Transverse colon (tissue), 4 donors: ENCODE measurements at regions of chr11 and their contacts with region 1.

Region 1: GRCh38 chr11:66686801-66687750 is 9.4 kb upstream of the RBM4B start:
- DNase-seq: no peak
- H3K4me3 ChIP-seq: no peak overlapping the region
- H3K27ac ChIP-seq: no peak overlapping the region
- H3K4me1 ChIP-seq: no peaks in the 10 kb centered on the region
- H3K27me3 ChIP-seq: no peaks in the 10 kb centered on the region
- CTCF ChIP-seq: no peak
- EP300 ChIP-seq: no peak
- POLR2A ChIP-seq: no peak

Region 2: DNA sequence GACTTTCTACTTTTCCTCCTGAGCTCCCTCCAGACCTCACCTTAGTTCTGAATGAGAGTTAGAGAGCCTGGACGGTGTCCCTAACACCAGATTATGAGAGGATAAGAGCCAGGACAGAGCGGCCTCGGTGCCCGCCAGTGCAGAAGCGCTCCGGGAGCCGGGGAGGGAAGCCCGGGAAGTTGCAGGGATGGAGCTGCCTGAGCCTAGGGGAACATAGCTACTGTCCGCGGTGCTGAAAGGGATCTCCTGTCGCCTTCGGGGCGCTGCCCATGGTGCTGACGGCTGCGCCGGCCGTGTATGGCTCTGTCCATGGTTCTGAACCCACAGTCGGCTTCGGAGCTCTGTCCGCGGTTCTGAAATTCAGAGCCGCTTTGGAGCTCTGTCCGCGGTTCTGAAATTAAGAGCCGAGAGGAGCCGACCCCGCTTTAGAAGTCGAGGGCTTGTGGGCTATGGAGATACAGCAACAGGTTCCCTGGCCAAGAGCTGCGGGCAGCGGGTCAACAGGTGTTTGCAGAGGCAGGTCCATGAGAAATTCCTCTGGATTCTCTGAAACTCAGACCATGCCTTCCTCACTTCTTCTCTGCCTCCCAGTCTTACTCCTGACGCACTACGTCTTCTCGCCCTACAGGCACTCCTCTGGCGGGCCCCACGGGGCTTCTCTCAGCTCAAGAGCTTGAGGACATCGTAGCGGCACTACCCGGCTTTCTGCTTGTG is 265.4 kb before region 1 on chr11:
- in situ Hi-C with region 1: loop called in 1 of 4 experiments (anchors 10 kb)
- intact Hi-C with region 1: no loop called
- DNase-seq: peak; percentile 92
- H3K4me3 ChIP-seq: no peak overlapping the region
- H3K27ac ChIP-seq: peak overlapping the region in 2 of 4 donors; percentile 16 to 40
- H3K4me1 ChIP-seq: peaks cover 0 to 35% (median 3%) of the 10 kb centered on the region in 4 donors
- H3K27me3 ChIP-seq: peaks cover 17% of the 10 kb centered on the region
- CTCF ChIP-seq: no peak
- EP300 ChIP-seq: no peak
- POLR2A ChIP-seq: no peak